PC-3 (cell line): ENCODE measurements at regions of chr3 and their contacts with region 1.

Region 1: DNA sequence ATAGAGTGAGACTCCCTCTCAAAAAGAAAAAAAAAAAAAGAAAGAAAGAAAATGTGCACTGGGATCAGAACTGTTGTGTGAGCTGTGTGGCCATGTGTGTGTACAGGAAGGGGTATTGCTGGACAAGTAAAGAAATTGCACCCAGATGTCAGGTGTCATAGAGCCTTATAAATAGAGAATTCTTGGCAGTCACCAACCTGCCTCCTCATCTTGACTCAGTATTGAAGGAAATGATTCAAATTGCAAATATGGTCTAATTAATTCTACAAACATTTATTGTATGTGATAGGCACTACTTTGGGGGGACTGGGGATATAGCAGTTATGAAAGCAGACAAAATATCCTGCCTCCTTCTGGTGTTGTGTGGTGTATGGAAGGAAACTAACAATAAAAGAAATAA is 243.8 kb upstream of the TTC14 start:
- DNase-seq: peak; percentile 92
- ATAC-seq: peak; percentile 97
- H3K4me3 ChIP-seq: no peak overlapping the region
- H3K27ac ChIP-seq: peak overlapping the region; percentile 61
- H3K4me1 ChIP-seq: peaks cover 24% of the 10 kb centered on the region
- H3K27me3 ChIP-seq: no peaks in the 10 kb centered on the region
- CTCF ChIP-seq: peak; percentile 52

Region 2: DNA sequence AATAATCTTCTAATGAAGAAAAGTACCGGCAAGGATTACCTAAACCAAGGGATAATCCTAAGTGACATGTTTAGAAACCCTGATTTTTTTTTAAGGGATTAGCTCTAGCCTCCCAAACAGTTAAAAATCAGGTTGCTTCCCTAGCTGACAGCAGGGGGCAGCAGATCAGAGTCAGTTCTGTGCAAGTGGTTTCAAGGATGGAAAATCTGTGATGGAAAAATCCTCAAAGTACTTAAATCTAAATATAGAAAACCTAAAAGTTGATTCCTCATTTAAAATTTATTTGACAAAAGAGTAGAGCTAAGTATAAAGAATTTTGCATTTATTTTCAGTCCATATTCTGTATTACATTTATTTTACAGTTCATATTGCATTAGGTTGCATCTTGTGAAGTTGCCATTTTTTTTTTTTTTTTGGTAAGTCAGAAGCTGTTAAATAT is 429.1 kb before region 1 on chr3:
- CTCF ChIA-PET with region 1: no interaction called
- POLR2A ChIA-PET with region 1: no interaction called
- intact Hi-C with region 1: loop called (anchors 1 kb)
- DNase-seq: peak; percentile 73
- ATAC-seq: peak; percentile 71
- H3K4me3 ChIP-seq: no peak overlapping the region
- H3K27ac ChIP-seq: no peak overlapping the region
- H3K4me1 ChIP-seq: no peaks in the 10 kb centered on the region
- H3K27me3 ChIP-seq: no peaks in the 10 kb centered on the region
- CTCF ChIP-seq: peak; percentile 92

Region 3: DNA sequence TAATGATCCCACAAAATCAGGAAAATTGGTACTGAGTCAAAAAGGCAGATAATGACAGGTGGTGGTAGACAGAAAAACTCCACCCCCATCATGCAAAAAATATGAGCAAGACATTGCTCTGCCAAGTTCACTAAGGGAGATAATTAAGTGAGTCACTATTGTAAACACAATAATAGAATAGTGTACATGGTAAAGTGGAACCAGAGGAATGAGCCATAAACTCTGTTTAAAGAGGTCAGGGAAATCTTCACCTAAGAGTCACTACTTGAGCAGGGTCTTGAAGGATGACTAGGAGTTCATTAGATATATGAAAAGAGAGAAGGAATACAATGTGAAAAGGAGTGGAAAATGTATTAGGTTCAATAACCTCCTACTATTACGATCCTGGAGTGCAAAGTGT is 108.0 kb before region 1 on chr3:
- CTCF ChIA-PET with region 1: no interaction called
- POLR2A ChIA-PET with region 1: no interaction called
- intact Hi-C with region 1: loop called (anchors 1 kb)
- DNase-seq: peak; percentile 95
- ATAC-seq: peak; percentile 88
- H3K4me3 ChIP-seq: no peak overlapping the region
- H3K27ac ChIP-seq: peak overlapping the region; percentile 58
- H3K4me1 ChIP-seq: peaks cover 46% of the 10 kb centered on the region
- H3K27me3 ChIP-seq: no peaks in the 10 kb centered on the region
- CTCF ChIP-seq: no peak

Region 4: DNA sequence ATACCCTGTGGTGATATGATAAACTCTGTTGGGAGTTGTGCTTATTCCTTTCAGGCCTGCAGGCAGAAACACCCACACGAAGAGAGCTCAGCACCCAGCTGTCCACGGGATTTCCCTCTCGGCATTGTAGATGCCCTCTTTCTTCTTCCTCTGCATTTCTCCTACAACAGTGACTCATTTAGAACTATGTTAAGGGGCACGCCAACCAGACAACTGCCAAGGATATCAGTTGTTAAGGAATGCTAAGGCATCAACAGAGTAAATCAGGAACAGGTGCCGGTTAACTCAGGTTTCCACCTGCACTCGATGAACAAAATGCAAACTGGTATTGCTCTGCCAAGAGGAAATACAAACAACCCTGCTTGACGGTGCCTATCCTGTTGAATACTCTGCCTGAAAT is 51.5 kb before region 1 on chr3:
- CTCF ChIA-PET with region 1: no interaction called
- POLR2A ChIA-PET with region 1: no interaction called
- intact Hi-C with region 1: loop called (anchors 1 kb)
- DNase-seq: peak; percentile 90
- ATAC-seq: peak; percentile 87
- H3K4me3 ChIP-seq: peak overlapping the region; percentile 48
- H3K27ac ChIP-seq: peak overlapping the region; percentile 47
- H3K4me1 ChIP-seq: peaks cover 40% of the 10 kb centered on the region
- H3K27me3 ChIP-seq: no peaks in the 10 kb centered on the region
- CTCF ChIP-seq: no peak

Region 5: DNA sequence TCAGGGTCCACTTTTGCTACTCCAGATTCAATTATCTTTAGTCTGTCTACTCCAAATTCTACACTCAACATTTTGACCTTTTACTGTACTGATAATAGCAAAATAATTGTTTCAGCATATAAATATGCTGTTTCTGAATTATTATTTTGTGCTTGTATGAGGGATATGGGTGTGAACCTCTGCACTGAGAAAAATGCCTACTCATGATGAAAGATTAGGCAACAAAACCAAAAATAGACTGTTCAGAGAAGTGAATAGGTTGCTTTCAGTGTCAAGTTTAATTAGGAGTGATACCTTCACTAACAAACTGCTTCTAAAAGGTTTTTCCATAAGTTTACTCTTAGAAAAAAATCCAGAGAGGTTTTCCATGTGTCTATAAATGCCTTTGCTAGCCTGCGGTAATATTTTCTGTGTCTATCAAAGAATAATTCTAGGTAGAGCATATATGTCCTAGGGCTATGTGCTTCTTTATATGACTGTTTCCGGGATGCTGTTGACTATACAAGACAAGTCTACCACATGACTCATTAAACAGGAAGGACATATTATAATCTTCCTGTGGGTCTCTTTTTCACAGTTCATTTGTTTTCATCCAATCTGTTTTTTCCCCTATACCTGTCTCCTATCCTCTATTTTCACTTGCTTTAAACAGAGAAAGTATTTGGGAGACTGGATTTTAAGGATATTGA is 25.3 kb after region 1 on chr3:
- CTCF ChIA-PET with region 1: no interaction called
- POLR2A ChIA-PET with region 1: no interaction called
- intact Hi-C with region 1: no loop called
- DNase-seq: peak; percentile 75
- ATAC-seq: peak; percentile 90
- H3K4me3 ChIP-seq: no peak overlapping the region
- H3K27ac ChIP-seq: peak overlapping the region; percentile 69
- H3K4me1 ChIP-seq: peaks cover 32% of the 10 kb centered on the region
- H3K27me3 ChIP-seq: no peaks in the 10 kb centered on the region
- CTCF ChIP-seq: no peak

Region 6: DNA sequence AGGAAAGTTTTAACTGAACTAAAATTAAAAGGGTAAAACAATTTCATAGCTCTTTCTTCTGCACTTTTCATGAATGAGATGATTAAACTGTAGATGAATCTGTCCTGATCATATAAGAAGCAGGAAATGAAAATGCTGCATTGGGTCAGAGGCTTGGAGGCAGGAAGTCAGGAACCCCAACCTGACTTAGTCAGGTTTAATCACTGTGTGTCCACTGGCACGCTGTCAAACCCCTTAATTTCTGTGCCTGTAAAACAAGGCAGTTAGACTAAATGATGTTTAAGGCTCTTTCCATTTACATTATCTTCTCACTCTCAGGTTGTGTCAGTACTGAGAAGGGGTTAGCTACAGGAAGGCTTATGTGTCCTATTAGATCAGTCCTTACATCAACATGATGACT is 50.5 kb after region 1 on chr3:
- CTCF ChIA-PET with region 1: no interaction called
- POLR2A ChIA-PET with region 1: no interaction called
- intact Hi-C with region 1: loop called (anchors 2 kb)
- DNase-seq: peak; percentile 95
- ATAC-seq: peak; percentile 94
- H3K4me3 ChIP-seq: peak overlapping the region; percentile 47
- H3K27ac ChIP-seq: peak overlapping the region; percentile 93
- H3K4me1 ChIP-seq: peaks cover 31% of the 10 kb centered on the region
- H3K27me3 ChIP-seq: no peaks in the 10 kb centered on the region
- CTCF ChIP-seq: no peak

Region 7: GRCh38 chr3:180433152-180433551 is 75.0 kb after region 1 on chr3:
- CTCF ChIA-PET with region 1: no interaction called
- POLR2A ChIA-PET with region 1: no interaction called
- intact Hi-C with region 1: loop called (anchors 5 kb)
- DNase-seq: peak; percentile 94
- ATAC-seq: peak; percentile 97
- H3K4me3 ChIP-seq: no peak overlapping the region
- H3K27ac ChIP-seq: peak overlapping the region; percentile 88
- H3K4me1 ChIP-seq: peaks cover 22% of the 10 kb centered on the region
- H3K27me3 ChIP-seq: no peaks in the 10 kb centered on the region
- CTCF ChIP-seq: no peak